ENCODE measurements at regions of chr20 and their contacts with region 1.

Region 1: GRCh38 chr20:4014031-4014474 is 1.3 kb downstream of the RNF24 start:
- DNase-seq: peak; percentile 77 to 90
- H3K4me3 ChIP-seq: peak overlapping the region; percentile 92
- H3K27ac ChIP-seq: peak overlapping the region; percentile 62
- H3K4me1 ChIP-seq: peaks cover 55% of the 10 kb centered on the region
- H3K27me3 ChIP-seq: no peaks in the 10 kb centered on the region
- CTCF ChIP-seq: peak; percentile 74

Region 2: DNA sequence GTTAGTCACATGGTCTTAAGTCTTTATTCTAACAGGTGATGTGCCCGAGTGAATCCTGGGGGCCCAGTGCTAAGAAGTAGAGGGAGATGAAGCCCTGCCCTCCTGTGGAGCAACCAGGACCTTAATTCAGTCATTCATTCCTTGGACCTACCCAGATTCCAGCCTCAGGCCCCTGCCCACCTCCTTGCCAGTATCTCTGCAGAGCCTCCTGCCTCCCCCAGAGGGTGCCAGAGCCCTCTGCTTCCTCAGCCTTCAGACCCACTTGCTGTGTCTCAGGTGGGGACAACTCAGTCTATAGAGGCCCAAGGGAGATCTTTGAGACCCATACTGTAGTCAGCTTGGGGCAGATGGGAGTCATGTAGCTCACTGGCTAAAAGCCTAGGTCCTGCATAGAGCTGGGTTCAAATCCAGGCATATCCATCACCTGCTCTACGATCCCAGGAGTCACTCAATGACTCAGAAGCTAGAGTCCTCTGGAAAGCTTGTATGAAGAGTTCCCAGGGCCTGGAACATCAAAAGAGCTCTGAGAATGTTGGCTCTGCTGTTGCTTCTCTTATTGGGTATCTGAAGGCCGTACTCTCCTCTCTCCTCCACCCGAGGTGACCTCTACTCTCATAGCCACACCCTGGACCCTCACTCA is 297.7 kb before region 1 on chr20:
- CTCF ChIA-PET with region 1: no interaction called
- POLR2A ChIA-PET with region 1: no interaction called
- intact Hi-C with region 1: loop called (anchors 1 kb)
- DNase-seq: peak in 1 of 2 experiments; percentile 51
- H3K4me3 ChIP-seq: no peak overlapping the region
- H3K27ac ChIP-seq: no peak overlapping the region
- H3K4me1 ChIP-seq: no peaks in the 10 kb centered on the region
- H3K27me3 ChIP-seq: peaks cover 6% of the 10 kb centered on the region; the same call in 1 of the 2 replicates
- CTCF ChIP-seq: peak; percentile 76

Region 3: DNA sequence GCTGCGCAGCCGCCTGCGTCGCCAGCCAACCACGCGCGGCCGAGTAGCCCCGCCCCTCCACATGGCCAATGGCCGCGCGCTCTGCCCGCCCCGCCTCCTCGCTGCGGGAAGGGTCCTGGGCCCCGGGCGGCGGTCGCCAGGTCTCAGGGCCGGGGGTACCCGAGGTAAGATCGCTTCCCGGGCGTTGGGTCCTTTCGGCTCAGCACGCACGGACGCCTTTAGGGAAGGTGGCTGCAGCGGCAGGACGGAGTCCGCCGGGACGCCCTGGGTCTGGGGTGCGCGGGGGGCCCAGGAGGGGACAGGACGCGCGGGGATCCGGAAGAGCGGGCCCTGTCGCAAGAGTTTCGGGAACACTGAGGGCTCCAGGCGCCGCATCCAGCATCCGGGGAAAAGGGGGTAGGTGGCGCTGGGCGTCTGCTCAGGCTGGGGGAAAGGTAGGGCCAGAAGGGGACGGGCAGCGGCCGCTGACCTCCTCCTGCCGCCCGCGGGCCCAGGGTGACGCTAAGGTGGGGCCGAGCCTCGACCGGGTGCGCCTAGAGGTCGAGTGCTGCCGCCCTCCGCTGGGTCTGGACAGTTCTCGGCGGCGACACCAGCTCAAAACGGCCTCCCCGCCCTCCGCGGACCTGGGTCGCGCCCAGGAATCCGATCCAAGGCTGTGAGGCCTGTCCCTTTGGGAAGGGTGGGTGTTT is 167.2 kb before region 1 on chr20 and contains the start of gene MAVS:
- CTCF ChIA-PET with region 1: interaction called, 14 read pairs
- POLR2A ChIA-PET with region 1: interaction called, 9 read pairs
- intact Hi-C with region 1: no loop called
- DNase-seq: peak; percentile 66 to 91
- H3K4me3 ChIP-seq: peak within 1 kb of the TSS; percentile 100
- H3K27ac ChIP-seq: peak within 1 kb of the TSS; percentile 88
- H3K4me1 ChIP-seq: peaks cover 54% of the 10 kb centered on the region
- H3K27me3 ChIP-seq: no peaks in the 10 kb centered on the region
- CTCF ChIP-seq: no peak
- total RNA-seq, gene MAVS: 53.6 and 61.3 TPM in 2 replicates

Region 4: GRCh38 chr20:3932681-3933080 is 81.4 kb before region 1 on chr20:
- CTCF ChIA-PET with region 1: no interaction called
- POLR2A ChIA-PET with region 1: no interaction called
- intact Hi-C with region 1: no loop called
- DNase-seq: no peak
- H3K4me3 ChIP-seq: no peak overlapping the region
- H3K27ac ChIP-seq: no peak overlapping the region
- H3K4me1 ChIP-seq: no peaks in the 10 kb centered on the region
- H3K27me3 ChIP-seq: no peaks in the 10 kb centered on the region
- CTCF ChIP-seq: no peak

Region 5: GRCh38 chr20:4067600-4068261 is 53.7 kb after region 1 on chr20:
- CTCF ChIA-PET with region 1: interaction called, 7 read pairs
- POLR2A ChIA-PET with region 1: interaction called, 3 read pairs
- intact Hi-C with region 1: loop called (anchors 1 kb)
- DNase-seq: peak; percentile 57 to 75
- H3K4me3 ChIP-seq: no peak overlapping the region
- H3K27ac ChIP-seq: no peak overlapping the region
- H3K4me1 ChIP-seq: peaks cover 22% of the 10 kb centered on the region
- H3K27me3 ChIP-seq: no peaks in the 10 kb centered on the region
- CTCF ChIP-seq: no peak

Region 6: GRCh38 chr20:4084096-4084495 is 70.0 kb after region 1 on chr20:
- CTCF ChIA-PET with region 1: interaction called, 9 read pairs
- POLR2A ChIA-PET with region 1: interaction called, 4 read pairs
- intact Hi-C with region 1: loop called (anchors 1 kb)
- DNase-seq: no peak
- H3K4me3 ChIP-seq: no peak overlapping the region
- H3K27ac ChIP-seq: no peak overlapping the region
- H3K4me1 ChIP-seq: peaks cover 11% of the 10 kb centered on the region; the same call in 1 of the 2 replicates
- H3K27me3 ChIP-seq: no peaks in the 10 kb centered on the region
- CTCF ChIP-seq: no peak

Region 7: DNA sequence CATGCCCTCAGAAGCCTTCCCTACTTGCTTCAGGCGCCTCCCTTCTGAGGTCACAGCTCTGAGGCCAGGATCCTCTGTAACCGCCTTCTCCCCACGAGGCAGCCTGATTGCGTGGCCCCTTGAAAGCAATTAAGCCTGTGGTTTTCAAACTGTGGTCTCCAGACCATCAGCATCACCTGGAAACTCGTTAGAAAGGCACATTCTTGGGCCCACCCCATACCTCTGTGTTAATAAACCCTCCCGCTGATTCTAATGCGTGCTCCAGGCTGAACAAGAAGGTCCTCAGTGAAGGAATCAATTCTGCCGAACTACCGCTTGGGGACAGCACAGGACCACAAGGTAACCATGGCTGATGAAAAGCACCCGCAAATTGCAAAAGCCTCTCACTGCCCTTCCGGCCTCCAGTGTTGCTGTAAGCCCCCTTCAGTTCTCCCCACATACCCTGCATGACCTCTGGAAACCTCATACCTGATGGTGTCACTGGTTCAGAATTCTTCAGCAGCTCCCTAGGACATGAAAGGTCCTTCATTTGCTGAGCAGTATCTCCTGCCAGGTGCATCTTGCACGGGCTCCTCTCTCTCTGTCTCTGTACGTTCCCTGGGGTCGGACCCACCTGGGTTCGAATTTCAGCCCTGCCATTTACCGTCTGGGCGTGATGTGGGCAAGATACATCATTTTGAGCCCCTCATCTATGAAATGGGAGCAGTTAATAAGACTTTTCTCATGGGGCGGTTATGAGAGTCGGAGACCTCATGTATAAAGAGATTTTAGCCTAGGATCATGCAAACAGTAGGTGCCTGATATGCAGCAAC is 94.6 kb after region 1 on chr20:
- CTCF ChIA-PET with region 1: no interaction called
- POLR2A ChIA-PET with region 1: no interaction called
- intact Hi-C with region 1: loop called (anchors 1 kb)
- DNase-seq: peak; percentile 68 to 72
- H3K4me3 ChIP-seq: no peak overlapping the region; the same call in 1 of the 2 replicates
- H3K27ac ChIP-seq: peak overlapping the region; percentile 65
- H3K4me1 ChIP-seq: peaks cover 40% of the 10 kb centered on the region
- H3K27me3 ChIP-seq: no peaks in the 10 kb centered on the region
- CTCF ChIP-seq: peak; percentile 97

Measured in PC-9 (cell line).